HEK293 (cell line): ENCODE measurements at regions of chr6 and their contacts with region 1.

Region 1: DNA sequence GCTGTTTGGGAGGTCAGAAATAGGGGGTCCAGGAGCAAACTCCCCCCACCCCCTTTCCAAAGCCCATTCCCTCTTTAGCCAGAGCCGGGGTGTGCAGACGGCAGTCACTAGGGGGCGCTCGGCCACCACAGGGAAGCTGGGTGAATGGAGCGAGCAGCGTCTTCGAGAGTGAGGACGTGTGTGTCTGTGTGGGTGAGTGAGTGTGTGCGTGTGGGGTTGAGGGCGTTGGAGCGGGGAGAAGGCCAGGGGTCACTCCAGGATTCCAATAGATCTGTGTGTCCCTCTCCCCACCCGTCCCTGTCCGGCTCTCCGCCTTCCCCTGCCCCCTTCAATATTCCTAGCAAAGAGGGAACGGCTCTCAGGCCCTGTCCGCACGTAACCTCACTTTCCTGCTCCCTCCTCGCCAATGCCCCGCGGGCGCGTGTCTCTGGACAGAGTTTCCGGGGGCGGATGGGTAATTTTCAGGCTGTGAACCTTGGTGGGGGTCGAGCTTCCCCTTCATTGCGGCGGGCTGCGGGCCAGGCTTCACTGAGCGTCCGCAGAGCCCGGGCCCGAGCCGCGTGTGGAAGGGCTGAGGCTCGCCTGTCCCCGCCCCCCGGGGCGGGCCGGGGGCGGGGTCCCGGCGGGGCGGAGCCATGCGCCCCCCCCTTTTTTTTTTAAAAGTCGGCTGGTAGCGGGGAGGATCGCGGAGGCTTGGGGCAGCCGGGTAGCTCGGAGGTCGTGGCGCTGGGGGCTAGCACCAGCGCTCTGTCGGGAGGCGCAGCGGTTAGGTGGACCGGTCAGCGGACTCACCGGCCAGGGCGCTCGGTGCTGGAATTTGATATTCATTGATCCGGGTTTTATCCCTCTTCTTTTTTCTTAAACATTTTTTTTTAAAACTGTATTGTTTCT is at the start of gene VEGFA:
- H3K4me3 ChIP-seq: peak within 1 kb of the TSS; percentile 84
- H3K27ac ChIP-seq: peak within 1 kb of the TSS; percentile 82
- H3K4me1 ChIP-seq: no peaks in the 10 kb centered on the region; the same call in 1 of the 2 replicates
- CTCF ChIP-seq: peak; percentile 98

Region 2: GRCh38 chr6:43347021-43347420 is 422.8 kb before region 1 on chr6:
- CTCF ChIA-PET with region 1: no interaction called
- POLR2A ChIA-PET with region 1: no interaction called
- H3K4me3 ChIP-seq: no peak overlapping the region
- H3K27ac ChIP-seq: no peak overlapping the region
- H3K4me1 ChIP-seq: no peaks in the 10 kb centered on the region
- CTCF ChIP-seq: no peak

Region 3: GRCh38 chr6:43629104-43629504 is 140.7 kb before region 1 on chr6 and contains the start of gene GTPBP2:
- CTCF ChIA-PET with region 1: interaction called, 4 read pairs
- POLR2A ChIA-PET with region 1: interaction called, 13 read pairs
- H3K4me3 ChIP-seq: peak within 1 kb of the TSS; percentile 77
- H3K27ac ChIP-seq: peak within 1 kb of the TSS; percentile 90
- H3K4me1 ChIP-seq: 0 out of 2 replicates have a peak, but pooled peaks cover 8% of the 10 kb centered on the region
- CTCF ChIP-seq: no peak

Region 4: GRCh38 chr6:43723737-43724295 is 46.0 kb before region 1 on chr6:
- CTCF ChIA-PET with region 1: interaction called, 30 read pairs
- POLR2A ChIA-PET with region 1: interaction called, 40 read pairs
- H3K4me3 ChIP-seq: no peak overlapping the region
- H3K27ac ChIP-seq: no peak overlapping the region
- H3K4me1 ChIP-seq: peaks cover 10% of the 10 kb centered on the region
- CTCF ChIP-seq: peak; percentile 89

Region 5: GRCh38 chr6:43790025-43790523 is 20.3 kb after region 1 on chr6:
- CTCF ChIA-PET with region 1: interaction called, 23 read pairs
- POLR2A ChIA-PET with region 1: interaction called, 10 read pairs
- H3K4me3 ChIP-seq: no peak overlapping the region
- H3K27ac ChIP-seq: no peak overlapping the region
- H3K4me1 ChIP-seq: no peaks in the 10 kb centered on the region
- CTCF ChIP-seq: no peak

Region 6: DNA sequence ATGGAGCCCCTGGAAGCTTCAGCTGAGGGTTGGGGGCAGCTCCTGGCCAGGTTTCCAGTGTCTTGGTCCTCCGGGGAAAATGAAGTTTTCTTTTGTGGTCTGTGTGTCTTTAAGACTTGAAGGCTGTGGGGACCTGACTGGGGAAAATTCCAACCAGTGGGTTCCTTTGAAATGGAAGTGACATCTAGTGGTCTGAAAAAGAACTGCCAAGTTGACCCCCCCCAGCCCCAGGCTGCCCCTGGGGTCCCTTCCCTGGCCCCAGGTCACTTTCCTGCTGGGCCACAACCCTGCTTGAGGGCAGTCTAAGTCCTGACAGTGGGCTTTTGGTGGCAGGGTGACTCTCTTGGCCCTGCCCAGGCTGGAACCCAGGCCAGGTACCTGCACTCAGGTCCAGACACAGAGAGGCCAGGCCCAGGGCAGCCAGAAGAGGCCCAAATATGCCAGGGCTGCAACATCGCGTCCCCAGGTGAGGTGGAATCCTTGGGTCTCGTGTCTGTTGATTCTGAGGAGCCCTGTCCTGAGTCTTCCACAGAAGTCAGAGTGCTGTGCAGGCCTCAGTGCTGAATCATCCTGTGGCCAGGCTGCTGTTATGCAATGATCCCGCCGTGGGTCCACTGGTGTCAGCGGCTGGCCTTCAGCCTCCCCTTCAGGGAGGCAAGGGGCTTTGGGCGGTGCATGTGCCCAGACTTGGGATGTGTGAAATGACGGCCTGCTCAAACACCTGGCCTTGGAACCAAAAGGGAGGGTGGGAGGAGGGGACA is 68.7 kb after region 1 on chr6:
- CTCF ChIA-PET with region 1: interaction called, 15 read pairs
- POLR2A ChIA-PET with region 1: interaction called, 3 read pairs
- H3K4me3 ChIP-seq: no peak overlapping the region
- H3K27ac ChIP-seq: no peak overlapping the region
- H3K4me1 ChIP-seq: no peaks in the 10 kb centered on the region
- CTCF ChIP-seq: no peak

Region 7: DNA sequence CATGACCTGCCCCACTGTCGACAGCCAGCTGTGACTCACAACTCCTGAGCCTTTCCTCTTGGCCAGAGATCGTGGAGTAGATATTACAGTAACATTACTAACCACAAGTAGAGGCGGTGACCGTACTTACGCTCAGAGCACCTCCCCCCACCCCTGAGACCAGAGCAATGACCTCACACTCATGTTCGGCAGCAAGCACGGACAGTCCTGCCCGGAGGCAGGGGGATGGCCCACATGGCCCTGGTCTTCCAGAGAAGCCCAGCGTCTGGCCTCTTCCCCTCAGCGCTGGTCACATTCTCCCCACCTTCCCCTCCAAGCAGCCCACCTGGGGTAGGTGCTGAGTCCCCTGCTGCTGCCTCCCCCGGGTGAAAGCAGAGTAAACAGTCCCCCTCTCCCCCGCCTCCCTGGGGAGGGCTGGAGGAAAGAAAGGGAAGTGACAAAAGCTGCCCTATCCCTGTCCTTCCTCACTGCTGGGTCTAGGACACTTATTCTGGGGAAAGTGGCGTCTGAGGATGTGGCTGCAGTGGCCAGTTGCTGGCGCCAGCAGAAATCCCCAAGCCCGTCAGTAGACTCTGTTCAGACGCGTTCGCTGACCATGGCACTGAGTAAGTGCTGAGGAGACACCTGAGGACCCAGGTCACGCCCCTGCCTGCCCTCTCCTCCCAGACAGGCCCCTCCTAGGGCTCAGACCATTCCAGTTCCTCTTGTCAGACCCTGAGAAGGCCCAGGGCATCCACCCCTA is 289.0 kb after region 1 on chr6:
- CTCF ChIA-PET with region 1: interaction called, 26 read pairs
- POLR2A ChIA-PET with region 1: interaction called, 12 read pairs
- H3K4me3 ChIP-seq: no peak overlapping the region
- H3K27ac ChIP-seq: no peak overlapping the region
- H3K4me1 ChIP-seq: no peaks in the 10 kb centered on the region
- CTCF ChIP-seq: no peak

Region 8: GRCh38 chr6:44086931-44087574 is 317.3 kb after region 1 on chr6:
- CTCF ChIA-PET with region 1: interaction called, 43 read pairs
- POLR2A ChIA-PET with region 1: interaction called, 4 read pairs
- H3K4me3 ChIP-seq: no peak overlapping the region
- H3K27ac ChIP-seq: no peak overlapping the region
- H3K4me1 ChIP-seq: no peaks in the 10 kb centered on the region
- CTCF ChIP-seq: 0 out of 2 replicates have a peak, but pooled peaks have one; percentile 13